ENCODE measurements at regions of chr10 and their contacts with region 1.

Region 1: GRCh38 chr10:78960316-78960800 is 108.4 kb upstream of the ZMIZ1 start:
- DNase-seq: no peak
- ATAC-seq: no peak
- H3K4me3 ChIP-seq: no peak overlapping the region
- H3K27ac ChIP-seq: no peak overlapping the region
- H3K4me1 ChIP-seq: peaks cover 27% of the 10 kb centered on the region
- H3K27me3 ChIP-seq: no peaks in the 10 kb centered on the region
- CTCF ChIP-seq: no peak

Region 2: DNA sequence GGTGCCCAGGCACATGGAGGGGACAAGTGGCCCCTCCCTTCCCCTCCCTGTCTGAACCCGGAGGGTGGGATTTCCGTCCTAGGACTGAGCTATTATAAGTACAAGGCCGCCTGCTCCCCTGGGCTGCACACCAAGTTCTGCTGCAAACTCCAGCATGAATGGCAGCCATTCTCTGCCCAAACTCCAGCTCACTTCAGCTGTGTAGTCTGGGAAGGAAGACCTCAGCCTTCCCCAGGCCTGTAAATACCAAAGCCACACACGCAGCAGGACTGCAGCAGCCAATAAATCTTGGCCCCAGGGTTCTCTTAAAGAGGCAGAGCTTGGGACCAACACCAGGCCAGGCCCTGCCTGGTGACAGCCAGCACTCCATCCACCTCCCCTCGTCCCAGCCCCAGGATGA is 182.9 kb before region 1 on chr10:
- CTCF ChIA-PET with region 1: no interaction called
- POLR2A ChIA-PET with region 1: no interaction called
- in situ Hi-C with region 1: no loop called
- intact Hi-C with region 1: loop called (anchors 10 kb)
- DNase-seq: no peak
- ATAC-seq: peak; percentile 61
- H3K4me3 ChIP-seq: no peak overlapping the region
- H3K27ac ChIP-seq: peak overlapping the region; percentile 58
- H3K4me1 ChIP-seq: peaks cover 45% of the 10 kb centered on the region
- H3K27me3 ChIP-seq: no peaks in the 10 kb centered on the region
- CTCF ChIP-seq: no peak

Measured in Panc1 (cell line).